Adrenal gland (tissue), 19 donors: ENCODE measurements at regions of chr7 and their contacts with region 1.

Region 1: DNA sequence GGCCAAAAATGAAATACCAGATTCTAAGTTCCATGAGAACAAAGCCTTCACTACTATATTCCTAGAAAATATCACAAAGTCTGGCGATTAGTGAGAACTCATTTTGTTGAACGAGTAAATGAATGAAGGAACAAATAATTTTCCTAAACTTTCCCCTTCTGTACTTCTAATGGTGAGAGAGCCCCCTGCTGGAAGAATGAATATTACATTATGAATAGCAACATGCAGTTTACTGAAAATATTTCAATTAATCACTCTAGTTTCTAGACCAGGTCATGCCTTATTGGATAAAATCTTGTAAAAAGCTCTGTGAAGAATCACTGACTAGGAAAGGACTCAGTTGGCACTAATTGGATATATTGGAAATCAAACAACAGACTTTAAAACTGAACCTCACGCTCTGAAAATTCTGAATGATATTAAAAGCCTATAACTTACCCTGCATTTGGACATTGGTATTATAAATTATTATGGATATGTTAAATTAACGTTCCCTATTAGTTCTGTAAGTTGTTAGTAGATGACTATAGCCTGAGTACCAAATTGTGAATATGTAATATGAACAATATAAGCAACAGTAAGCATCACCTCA is 32.4 kb upstream of the MTPN start:
- DNase-seq: no peak
- H3K4me3 ChIP-seq: no peak overlapping the region
- H3K27ac ChIP-seq: no peak overlapping the region
- H3K4me1 ChIP-seq: no peaks in the 10 kb centered on the region
- H3K27me3 ChIP-seq: no peaks in the 10 kb centered on the region
- CTCF ChIP-seq: peak; percentile 69 to 89 (median 76)
- POLR2A ChIP-seq: no peak

Region 2: DNA sequence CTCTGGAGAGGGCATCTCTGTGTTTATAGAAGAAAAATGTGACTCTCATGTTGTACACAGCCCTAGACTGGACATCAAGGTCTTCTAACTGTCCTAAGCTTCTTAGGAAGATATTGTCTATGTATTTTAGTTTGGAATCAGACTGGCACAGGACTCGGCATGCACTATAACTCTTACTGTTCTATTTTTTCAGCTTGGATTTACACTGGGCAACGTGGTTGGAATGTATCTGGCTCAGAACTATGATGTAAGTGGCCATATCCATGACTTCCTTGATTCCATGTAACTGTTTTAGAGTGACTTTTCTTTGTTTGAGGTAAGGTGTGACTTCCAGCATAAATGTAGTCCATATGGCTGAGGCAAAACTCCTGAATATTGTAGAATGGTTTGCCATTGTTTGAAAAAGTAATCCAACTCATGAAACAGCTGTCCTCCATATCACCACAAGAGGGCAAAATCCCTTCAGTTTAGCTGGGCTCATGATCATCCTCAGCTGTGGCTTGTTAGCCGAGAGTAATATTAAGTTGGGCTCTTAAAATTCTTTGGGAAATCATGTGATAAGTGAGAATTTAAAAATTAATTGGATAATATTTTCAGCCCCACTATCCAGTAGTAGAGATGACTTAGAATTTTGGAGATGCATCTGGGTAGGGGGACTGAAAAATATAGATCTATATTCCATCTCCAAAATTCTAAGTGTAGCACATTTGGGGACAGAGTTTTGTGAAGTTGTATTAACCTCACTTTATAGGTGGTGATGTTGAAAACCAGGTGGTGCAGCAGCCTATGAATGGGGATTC is 336.8 kb before region 1 on chr7:
- intact Hi-C with region 1: loop called in 1 of 2 experiments (anchors 10 kb)
- DNase-seq: peak in 4 of 7 donors; percentile 34 to 55 (median 46)
- H3K4me3 ChIP-seq: no peak overlapping the region
- H3K27ac ChIP-seq: peak overlapping the region in 3 of 5 donors; percentile 15 to 63 (median 45)
- H3K4me1 ChIP-seq: peaks cover 19 to 38% of the 10 kb centered on the region in 2 donors
- H3K27me3 ChIP-seq: no peaks in the 10 kb centered on the region
- CTCF ChIP-seq: peak; percentile 67 to 85 (median 76)
- POLR2A ChIP-seq: no peak

Region 3: GRCh38 chr7:135684136-135684535 is 325.4 kb before region 1 on chr7:
- intact Hi-C with region 1: loop called (anchors 10 kb)
- DNase-seq: no peak
- H3K4me3 ChIP-seq: no peak overlapping the region
- H3K27ac ChIP-seq: peak overlapping the region in 2 of 5 donors; percentile 34 to 55
- H3K4me1 ChIP-seq: peaks cover 0 to 21% of the 10 kb centered on the region in 2 donors
- H3K27me3 ChIP-seq: no peaks in the 10 kb centered on the region
- CTCF ChIP-seq: no peak
- POLR2A ChIP-seq: no peak

Region 4: DNA sequence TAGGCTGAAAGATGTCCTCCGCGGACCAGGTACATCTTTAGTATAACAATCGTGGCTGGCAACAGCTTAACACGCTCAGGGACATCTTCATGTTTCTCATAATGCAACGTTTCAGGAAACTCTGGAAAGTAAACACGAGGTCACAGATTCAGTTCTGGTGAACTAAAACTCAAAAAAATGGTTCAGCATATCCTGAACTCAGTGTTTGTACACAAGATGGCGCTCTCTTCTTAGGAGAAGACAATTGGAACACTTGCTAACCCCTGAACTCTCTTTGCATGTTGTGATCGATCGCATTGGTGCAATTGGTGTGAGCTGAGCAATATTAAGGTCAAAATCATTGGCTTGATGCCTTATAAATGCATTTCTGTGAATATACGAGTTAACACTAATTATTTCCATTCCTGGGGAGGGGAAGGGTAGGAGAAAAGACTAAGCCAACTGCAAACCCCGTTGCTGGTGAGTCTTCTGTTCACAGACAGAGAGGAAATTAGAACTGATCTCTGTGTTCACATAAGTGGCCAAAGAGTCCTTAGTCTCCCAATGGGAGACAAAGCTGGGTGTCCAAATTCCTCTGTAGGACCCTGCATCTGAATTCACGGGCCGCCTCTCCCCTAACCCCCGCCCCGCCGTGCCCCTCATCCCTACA is 208.4 kb before region 1 on chr7:
- intact Hi-C with region 1: loop called (anchors 2 to 5 kb)
- DNase-seq: peak in 5 of 7 donors; percentile 28 to 57 (median 48)
- H3K4me3 ChIP-seq: no peak overlapping the region
- H3K27ac ChIP-seq: no peak overlapping the region
- H3K4me1 ChIP-seq: no peaks in the 10 kb centered on the region
- H3K27me3 ChIP-seq: no peaks in the 10 kb centered on the region
- CTCF ChIP-seq: peak; percentile 60 to 95 (median 87)
- POLR2A ChIP-seq: no peak

Region 5: GRCh38 chr7:136087881-136088280 is 78.3 kb after region 1 on chr7:
- intact Hi-C with region 1: no loop called
- DNase-seq: no peak
- H3K4me3 ChIP-seq: no peak overlapping the region
- H3K27ac ChIP-seq: no peak overlapping the region
- H3K4me1 ChIP-seq: peaks cover 0 to 7% of the 10 kb centered on the region in 2 donors
- H3K27me3 ChIP-seq: no peaks in the 10 kb centered on the region
- CTCF ChIP-seq: no peak
- POLR2A ChIP-seq: no peak

Region 6: DNA sequence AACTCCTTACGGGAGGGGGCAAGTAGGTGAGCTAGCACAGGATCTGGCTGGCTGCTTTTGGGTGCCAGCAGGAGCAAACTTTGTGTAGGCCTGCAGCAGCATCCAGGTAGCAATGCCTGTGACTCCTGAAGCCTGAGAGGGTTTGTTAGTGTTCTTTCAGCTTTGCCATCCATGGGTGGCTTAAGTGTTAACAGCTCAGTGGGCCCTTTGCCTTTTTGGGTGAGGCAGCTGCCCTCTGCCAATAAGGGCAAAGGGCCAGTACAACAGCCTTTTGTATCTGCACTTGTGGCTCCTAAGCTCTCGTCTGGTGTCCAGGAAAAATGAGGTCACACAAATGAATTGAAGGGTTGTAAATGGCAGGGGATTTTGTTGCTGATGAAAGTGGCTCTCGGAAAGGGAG is 499.9 kb after region 1 on chr7:
- intact Hi-C with region 1: no loop called
- DNase-seq: no peak
- H3K4me3 ChIP-seq: no peak overlapping the region
- H3K27ac ChIP-seq: no peak overlapping the region
- H3K4me1 ChIP-seq: no peaks in the 10 kb centered on the region
- H3K27me3 ChIP-seq: no peaks in the 10 kb centered on the region
- CTCF ChIP-seq: no peak
- POLR2A ChIP-seq: no peak